Calu3 (cell line): ENCODE measurements at regions of chr3 and their contacts with region 1.

Region 1: DNA sequence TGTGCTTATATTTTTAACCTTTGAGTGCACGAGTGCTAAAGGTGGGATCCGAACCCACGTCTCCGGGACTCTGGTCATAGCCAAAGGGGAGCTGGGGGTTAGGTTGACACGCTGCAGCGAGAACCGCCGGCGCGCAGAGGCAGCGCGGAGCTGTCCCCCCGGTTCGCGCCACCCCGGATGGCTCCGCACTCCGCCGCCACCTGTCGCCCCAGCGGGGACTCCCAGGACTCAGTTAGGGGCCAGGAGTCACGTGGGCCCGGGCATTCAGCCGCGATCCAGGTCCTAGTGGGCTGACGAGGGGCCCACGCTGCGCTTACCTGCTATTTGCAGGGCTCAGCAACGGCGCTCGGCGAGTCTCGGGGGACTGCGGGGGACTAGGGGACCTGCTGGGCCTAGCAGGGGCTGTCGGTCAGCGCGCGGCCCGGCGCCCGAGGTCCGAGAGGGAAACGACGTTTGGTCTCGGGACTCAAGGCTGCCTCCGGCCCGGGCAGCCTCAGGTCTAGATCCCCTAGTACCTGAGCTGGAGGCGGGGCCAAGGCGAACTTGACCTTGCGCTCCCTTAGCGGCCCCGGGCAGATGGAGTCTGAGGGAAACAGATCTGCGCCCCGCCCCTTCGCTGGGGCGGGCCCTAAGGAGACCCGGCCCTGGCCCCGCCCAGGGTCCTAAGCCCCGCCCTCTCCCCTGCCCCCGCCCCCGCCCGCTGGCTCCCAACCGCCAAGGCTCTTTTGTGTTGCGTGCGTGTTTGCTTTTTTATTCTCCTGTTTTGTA is at the start of gene NMNAT3:
- DNase-seq: peak; percentile 97
- H3K4me3 Mint-ChIP-seq: peak within 1 kb of the TSS; percentile 91
- H3K27ac Mint-ChIP-seq: no peak within 1 kb of the TSS
- H3K4me1 Mint-ChIP-seq: peaks cover 10% of the 10 kb centered on the region
- H3K27me3 Mint-ChIP-seq: peaks cover 15% of the 10 kb centered on the region
- CTCF ChIP-seq: peak; percentile 12
- total RNA-seq, gene NMNAT3: 7.2 and 9.7 TPM in 2 replicates

Region 2: GRCh38 chr3:138732456-138732855 is 945.1 kb before region 1 on chr3:
- CTCF ChIA-PET with region 1: no interaction called
- intact Hi-C with region 1: no loop called
- DNase-seq: no peak
- H3K4me3 Mint-ChIP-seq: no peak overlapping the region
- H3K27ac Mint-ChIP-seq: no peak overlapping the region
- H3K4me1 Mint-ChIP-seq: no peaks in the 10 kb centered on the region
- H3K27me3 Mint-ChIP-seq: no peaks in the 10 kb centered on the region
- CTCF ChIP-seq: no peak

Region 3: DNA sequence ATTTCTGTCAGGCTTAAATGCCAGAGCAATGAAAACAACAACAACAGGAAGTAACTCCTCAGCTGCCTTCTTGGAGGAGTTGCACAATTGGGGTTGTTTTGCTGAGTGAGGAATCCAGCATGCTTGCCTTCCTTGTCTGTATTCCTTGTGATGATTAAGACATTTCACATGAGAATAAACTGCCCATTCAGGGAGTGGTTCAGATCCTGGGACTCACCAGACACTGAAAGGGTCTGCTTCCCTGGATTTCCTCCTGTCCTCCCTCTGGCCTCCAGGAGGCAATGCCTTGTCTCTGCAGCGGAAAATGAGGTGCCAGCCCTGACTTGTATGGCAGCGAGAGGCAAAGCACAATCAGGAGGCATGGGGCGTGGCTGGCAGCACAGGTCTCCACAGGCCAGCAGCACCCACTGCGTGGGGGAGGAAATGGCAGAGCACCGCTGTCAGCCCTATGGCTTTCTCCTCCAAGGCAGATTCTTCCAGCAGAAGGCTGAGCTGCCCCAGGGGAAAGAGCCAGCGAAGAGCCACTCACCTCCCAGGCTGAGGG is 242.7 kb before region 1 on chr3:
- CTCF ChIA-PET with region 1: no interaction called
- intact Hi-C with region 1: loop called (anchors 5 kb)
- DNase-seq: peak; percentile 72
- H3K4me3 Mint-ChIP-seq: no peak overlapping the region
- H3K27ac Mint-ChIP-seq: peak overlapping the region; percentile 63
- H3K4me1 Mint-ChIP-seq: peaks cover 11% of the 10 kb centered on the region
- H3K27me3 Mint-ChIP-seq: no peaks in the 10 kb centered on the region
- CTCF ChIP-seq: peak; percentile 25

Region 4: DNA sequence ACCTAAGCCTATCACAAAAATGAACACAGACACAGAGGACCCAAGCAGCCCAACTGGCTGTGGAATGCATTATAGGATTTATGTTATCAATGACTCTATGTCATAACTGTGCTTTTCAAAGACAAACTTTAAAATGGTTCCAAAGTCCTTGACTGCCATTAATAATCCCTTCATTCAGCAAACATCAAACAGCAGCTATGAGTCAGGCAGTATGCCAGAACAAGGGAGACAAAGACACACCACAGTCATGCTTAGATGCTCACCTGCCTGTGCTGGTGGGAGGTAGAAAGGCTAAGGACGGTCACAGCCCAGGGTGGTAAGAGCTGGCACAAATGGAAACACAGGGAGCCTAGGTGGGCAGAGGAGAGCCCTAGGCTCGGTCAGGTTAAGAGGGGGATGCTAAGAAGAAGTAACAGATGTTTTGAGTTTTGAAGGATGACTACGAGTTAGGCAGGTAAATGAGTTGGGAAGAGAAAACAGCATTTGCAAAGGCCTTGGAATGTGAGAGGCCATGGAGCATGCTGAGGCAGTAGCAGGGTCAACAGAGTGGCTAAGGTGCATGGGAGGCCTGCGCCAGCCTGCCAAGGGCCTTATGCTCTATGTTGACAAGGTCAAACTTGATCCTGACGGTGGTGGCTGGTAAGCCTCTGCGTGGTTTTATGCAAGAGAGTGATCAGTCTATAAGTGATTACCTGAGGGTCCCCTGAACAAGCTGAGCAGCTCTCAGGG is 22.8 kb before region 1 on chr3:
- CTCF ChIA-PET with region 1: interaction called, 3 read pairs
- intact Hi-C with region 1: loop called (anchors 1 kb)
- DNase-seq: peak; percentile 41
- H3K4me3 Mint-ChIP-seq: no peak overlapping the region
- H3K27ac Mint-ChIP-seq: peak overlapping the region; percentile 3
- H3K4me1 Mint-ChIP-seq: peaks cover 20% of the 10 kb centered on the region
- H3K27me3 Mint-ChIP-seq: no peaks in the 10 kb centered on the region
- CTCF ChIP-seq: no peak